H1 (cell line): ENCODE measurements at regions of chr19 and their contacts with region 1.

Region 1: DNA sequence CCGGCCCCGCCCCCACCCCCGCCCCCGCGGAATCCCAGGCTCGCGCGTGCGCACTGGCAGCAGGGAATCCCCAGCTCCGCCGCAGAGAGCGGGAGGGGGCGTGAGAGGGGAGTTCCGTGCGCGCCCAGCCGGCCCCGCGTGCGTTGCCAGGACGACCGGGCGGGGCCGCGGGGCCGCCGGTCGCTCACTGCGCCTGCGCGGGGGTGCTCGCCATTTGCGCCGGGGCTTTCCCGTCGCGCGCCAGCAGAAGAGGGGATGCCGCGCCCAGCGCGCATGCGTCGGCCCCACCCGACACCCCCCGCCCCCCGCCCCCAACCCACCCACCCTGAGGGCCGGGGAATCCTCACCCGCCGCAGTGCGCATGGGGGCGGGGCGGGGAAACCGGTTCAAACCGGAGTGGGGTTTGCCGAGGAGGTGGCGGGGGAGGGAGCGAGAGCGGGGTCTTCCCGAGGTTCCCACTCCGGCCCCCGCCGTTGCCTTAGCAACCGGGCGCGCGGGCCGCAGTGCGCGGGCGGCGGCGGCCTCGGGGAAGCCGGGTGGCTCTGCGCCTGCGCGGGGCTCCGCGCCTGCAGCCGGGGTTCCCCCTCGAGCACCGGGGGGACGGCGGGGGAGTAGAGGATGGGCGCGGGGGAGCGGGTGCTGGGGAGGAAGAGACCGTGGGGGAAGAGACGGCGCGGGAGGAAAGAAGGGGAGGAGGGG is 15.1 kb downstream of the CCDC124 start:
- DNase-seq: peak; percentile 87 to 95
- H3K4me3 ChIP-seq: peak overlapping the region in 2 of 4 experiments; percentile 48 to 73; a peak in 6 of 8 replicates
- H3K27ac ChIP-seq: no peak overlapping the region
- H3K4me1 ChIP-seq: peaks cover 0 to 32% (median 24%) of the 10 kb centered on the region in 4 experiments; a peak in 6 of 7 replicates
- H3K27me3 ChIP-seq: peaks cover 16 to 42% (median 35%) of the 10 kb centered on the region in 4 experiments
- CTCF ChIP-seq: no peak
- EP300 ChIP-seq: no peak
- POLR2A ChIP-seq: no peak
- RAD21 ChIP-seq: no peak

Region 2: DNA sequence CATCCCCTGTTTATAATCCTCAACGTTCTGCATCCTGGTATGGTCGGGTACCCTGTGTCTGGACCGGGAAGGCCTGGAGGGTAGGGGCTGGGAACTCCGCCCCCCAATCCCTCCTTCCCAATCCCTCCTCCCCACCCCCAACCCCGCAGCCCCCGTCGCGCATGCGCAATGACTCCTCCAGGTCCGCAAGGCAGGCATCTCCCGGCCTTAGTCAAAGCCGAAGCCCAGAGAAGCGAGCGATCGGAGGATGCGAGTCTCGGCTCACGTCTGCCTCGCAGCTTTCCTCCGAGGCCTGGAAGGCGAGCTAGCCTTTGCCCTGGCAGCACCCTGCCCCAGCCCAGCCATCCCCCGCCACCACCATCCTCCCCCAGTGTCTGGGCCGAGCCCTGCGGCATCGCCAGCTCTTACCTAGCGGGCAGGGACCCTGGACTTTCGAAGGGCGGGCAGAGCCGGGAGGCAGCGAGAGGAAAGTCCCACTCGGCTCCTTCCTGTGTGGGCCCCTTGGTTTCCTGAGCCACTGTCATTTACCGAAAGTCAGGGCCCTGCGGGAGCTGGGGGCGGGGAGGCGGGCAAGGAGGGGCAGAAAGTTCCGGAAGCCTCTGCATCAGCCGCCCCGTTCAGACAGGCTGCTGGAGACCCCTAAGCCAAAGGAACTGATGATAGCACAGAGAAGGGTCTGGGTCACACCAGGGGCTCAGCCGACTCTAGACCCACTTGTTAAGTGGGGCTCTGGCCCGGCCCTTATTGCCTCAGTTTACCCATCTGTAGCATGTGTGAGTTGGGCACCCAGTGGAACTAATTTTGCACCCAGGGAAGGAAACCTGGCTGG is 100.2 kb before region 1 on chr19 and contains the start of gene JAK3:
- CTCF ChIA-PET with region 1: no interaction called
- POLR2A ChIA-PET with region 1: no interaction called
- DNase-seq: peak; percentile 75 to 90
- H3K4me3 ChIP-seq: peak within 1 kb of the TSS in 2 of 4 experiments; percentile 23 to 52; a peak in 4 of 8 replicates
- H3K27ac ChIP-seq: no peak within 1 kb of the TSS
- H3K4me1 ChIP-seq: peaks cover 0 to 8% (median under 1%) of the 10 kb centered on the region in 4 experiments; a peak in 4 of 7 replicates
- H3K27me3 ChIP-seq: peaks cover 0 to 7% (median 3%) of the 10 kb centered on the region in 4 experiments; a peak in 5 of 7 replicates
- CTCF ChIP-seq: no peak
- EP300 ChIP-seq: no peak
- POLR2A ChIP-seq: no peak
- RAD21 ChIP-seq: no peak
- total RNA-seq, gene JAK3: 3.2 and 4.0 TPM in 2 replicates

Region 3: DNA sequence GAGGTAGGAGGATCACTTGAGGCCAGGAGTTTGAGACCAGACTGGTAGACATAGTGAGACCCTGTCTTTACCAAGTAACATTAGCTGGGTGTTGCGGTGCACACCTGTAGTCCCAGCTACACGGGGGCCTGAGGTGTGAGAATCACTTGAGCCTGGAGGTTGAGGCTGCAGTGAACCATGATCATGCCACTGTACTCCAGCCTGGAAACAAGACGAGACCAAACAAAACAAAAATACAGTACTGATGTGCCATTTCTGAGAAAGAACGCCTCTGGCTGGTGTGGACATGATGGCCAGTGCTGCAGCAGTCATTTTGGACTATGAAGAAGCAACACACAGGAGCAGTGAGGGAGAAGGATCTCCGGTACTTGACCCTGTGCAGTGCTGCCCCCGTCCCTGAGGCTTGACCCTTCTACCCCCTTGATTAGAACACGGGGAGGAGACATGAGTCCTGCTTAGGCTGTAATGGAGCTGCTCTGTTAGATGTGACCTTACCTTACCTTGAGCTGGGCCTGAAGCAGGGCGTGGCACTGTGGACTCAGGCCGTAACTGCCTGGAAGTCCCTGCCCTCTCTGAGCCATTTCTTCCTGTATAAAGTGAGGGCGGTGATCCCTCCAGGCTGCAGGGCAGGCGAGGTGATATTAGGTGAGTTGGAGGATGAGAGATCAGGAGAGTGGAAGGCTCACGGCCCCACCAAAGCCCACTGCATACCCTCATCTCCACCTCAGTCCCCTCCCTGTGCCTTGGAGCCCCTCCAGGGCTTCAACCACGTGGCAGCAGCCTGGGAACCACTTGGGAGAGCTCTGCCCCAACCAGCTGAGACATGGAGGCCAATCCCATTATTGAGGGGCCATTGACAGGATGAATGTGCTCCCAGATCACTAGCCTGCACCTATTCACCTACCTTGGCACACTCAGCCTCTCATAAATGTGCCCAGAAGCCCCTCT is 82.3 kb before region 1 on chr19:
- CTCF ChIA-PET with region 1: interaction called, 7 read pairs
- POLR2A ChIA-PET with region 1: interaction called, 25 read pairs
- DNase-seq: peak in 1 of 2 experiments; percentile 59
- H3K4me3 ChIP-seq: no peak overlapping the region
- H3K27ac ChIP-seq: no peak overlapping the region
- H3K4me1 ChIP-seq: peaks cover 0 to 18% (median 13%) of the 10 kb centered on the region in 4 experiments; a peak in 6 of 7 replicates
- H3K27me3 ChIP-seq: no peaks in the 10 kb centered on the region
- CTCF ChIP-seq: no peak
- EP300 ChIP-seq: no peak
- POLR2A ChIP-seq: peak; percentile 81 to 92
- RAD21 ChIP-seq: no peak

Region 4: DNA sequence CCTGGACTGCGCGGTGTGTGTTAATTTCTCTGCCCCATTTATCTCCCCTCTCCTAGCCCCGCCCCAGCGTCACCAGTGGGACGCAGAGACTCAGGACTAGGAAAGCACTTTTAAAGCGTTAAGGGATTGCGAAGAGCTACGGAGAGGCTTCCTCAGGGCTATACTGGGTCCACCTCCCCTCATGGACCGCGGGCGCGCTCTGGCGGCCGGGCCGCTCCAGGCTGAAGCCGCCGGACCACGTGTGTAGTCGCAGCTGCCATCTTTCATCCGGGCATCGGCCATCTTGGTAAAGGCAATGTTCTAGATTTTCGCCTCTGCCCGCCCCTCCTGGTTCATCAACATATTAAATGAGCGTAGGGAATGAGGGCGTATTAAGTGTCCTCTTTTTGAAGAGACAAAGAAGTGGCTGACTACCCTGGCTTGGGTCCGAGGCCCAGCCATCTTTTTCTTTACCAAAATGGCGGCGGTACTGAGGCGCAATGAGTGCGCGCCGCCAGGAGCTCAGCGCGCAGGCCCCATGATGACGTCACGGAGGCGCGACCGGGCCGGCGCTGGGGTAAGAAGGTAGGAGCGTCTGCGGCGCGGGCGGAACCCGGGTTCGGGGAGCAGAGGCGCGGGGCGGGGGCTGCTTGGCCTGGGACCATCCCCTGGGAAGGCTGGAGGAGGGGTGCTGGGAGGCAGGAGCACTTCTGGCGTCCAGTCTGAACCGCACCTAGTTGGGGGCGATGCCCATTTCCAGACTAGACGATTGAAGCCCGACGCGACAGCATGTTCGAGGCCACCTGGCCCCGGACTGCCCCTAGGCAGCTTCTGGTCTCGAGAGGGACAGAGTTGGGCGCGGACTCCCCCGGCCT is 15.3 kb before region 1 on chr19 and contains the start of gene CCDC124:
- CTCF ChIA-PET with region 1: interaction called, 90 read pairs
- POLR2A ChIA-PET with region 1: interaction called, 58 read pairs
- DNase-seq: peak; percentile 86 to 95
- H3K4me3 ChIP-seq: peak within 1 kb of the TSS; percentile 80 to 94 (median 91)
- H3K27ac ChIP-seq: peak within 1 kb of the TSS; percentile 96
- H3K4me1 ChIP-seq: peaks cover 0 to 4% (median 2%) of the 10 kb centered on the region in 4 experiments; a peak in 3 of 7 replicates
- H3K27me3 ChIP-seq: no peaks in the 10 kb centered on the region
- CTCF ChIP-seq: peak; percentile 93 to 97 (median 97)
- EP300 ChIP-seq: peak in 1 of 2 experiments; percentile 16; a peak in 1 of 3 replicates
- POLR2A ChIP-seq: no peak; a peak in 2 of 3 replicates
- RAD21 ChIP-seq: peak; percentile 97 to 98
- total RNA-seq, gene CCDC124: 101 and 103 TPM in 2 replicates

Region 5: DNA sequence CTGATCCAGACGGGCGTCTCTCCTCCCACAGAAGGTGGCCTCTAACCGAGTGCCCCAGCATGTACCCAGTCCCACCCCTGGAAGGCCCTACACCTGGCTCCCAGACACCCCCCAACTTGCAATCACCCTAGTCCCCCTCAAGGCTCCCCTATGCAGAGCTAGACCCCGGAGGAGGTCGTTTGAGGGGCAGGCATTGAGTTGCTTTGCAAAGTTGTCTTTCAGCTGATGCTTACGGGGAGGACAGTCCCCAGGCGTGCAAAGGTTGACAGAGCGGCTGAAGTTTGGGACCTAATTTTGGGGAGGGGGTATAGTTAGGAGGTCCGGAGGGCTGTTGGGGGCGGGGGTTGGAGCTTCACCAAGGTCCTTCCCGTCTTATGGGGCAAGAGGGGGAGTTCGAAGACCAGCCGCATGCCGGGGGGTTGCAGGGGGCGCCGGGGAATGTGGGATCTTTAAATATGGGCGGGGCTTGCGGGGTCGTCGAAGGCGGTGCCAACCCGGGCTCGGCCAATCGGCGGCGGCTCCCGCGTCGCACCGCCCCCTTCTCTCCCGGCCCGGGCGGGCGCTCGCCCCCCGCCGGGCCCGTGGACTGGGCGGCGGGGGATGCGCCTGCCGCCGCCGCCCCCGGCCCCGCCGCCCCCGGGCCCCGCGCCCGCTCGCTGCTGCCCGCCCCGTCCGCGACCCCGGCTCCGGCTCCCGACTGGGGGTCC is 18.7 kb after region 1 on chr19 and contains the start of gene KCNN1:
- CTCF ChIA-PET with region 1: interaction called, 18 read pairs
- POLR2A ChIA-PET with region 1: interaction called, 23 read pairs
- DNase-seq: peak in 1 of 2 experiments; percentile 83
- H3K4me3 ChIP-seq: peak within 1 kb of the TSS; percentile 55 to 87 (median 72)
- H3K27ac ChIP-seq: no peak within 1 kb of the TSS
- H3K4me1 ChIP-seq: peaks cover 4 to 18% (median 11%) of the 10 kb centered on the region in 4 experiments
- H3K27me3 ChIP-seq: peaks cover 0 to 9% (median 3%) of the 10 kb centered on the region in 4 experiments; a peak in 3 of 7 replicates
- CTCF ChIP-seq: no peak
- EP300 ChIP-seq: no peak
- POLR2A ChIP-seq: no peak
- RAD21 ChIP-seq: no peak
- total RNA-seq, gene KCNN1: 9.3 and 11.0 TPM in 2 replicates

Region 6: DNA sequence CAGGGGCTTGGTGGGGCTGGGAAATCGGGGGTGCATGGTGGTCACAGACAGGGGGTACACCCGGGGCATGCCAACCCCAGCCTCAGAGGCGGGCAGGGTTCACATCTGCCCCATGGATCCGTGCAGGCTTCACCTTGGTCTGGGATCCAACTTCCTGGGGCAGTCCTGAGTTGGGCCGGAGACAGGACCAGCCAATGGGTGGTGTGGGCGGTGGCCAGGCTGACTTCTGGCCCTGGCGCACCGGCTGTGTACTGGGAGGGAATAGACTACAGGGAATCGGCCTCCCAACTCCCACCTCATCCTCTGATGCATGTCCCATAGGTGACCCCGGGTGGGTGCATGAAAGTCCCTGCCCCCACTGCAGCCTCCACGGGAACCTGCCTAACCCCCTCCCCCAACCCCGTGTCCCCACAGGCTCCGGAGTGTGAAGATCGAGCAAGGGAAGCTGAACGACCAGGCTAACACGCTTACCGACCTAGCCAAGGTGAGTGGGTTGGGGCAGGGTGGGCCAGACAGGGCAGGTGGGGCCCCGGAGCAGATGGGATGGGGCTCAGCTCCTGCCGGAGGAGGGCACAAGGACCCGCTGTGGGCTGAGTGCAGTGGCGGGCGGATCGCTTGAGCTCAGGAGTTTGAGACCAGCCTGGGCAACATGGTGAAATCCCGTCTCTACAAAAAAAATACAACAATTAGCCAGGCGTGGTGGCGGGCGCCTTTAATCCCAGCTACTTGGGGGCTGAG is 45.3 kb after region 1 on chr19:
- CTCF ChIA-PET with region 1: interaction called, 271 read pairs
- POLR2A ChIA-PET with region 1: interaction called, 17 read pairs
- DNase-seq: no peak
- H3K4me3 ChIP-seq: no peak overlapping the region
- H3K27ac ChIP-seq: no peak overlapping the region
- H3K4me1 ChIP-seq: peaks cover 0 to 3% (median 0%) of the 10 kb centered on the region in 4 experiments; a peak in 2 of 7 replicates
- H3K27me3 ChIP-seq: no peaks in the 10 kb centered on the region
- CTCF ChIP-seq: no peak
- EP300 ChIP-seq: no peak
- POLR2A ChIP-seq: no peak
- RAD21 ChIP-seq: no peak

Region 7: GRCh38 chr19:18023622-18024251 is 75.8 kb after region 1 on chr19:
- CTCF ChIA-PET with region 1: no interaction called
- POLR2A ChIA-PET with region 1: no interaction called
- DNase-seq: no peak
- H3K4me3 ChIP-seq: no peak overlapping the region
- H3K27ac ChIP-seq: no peak overlapping the region
- H3K4me1 ChIP-seq: peaks cover 0 to 4% (median 2%) of the 10 kb centered on the region in 4 experiments; a peak in 1 of 7 replicates
- H3K27me3 ChIP-seq: no peaks in the 10 kb centered on the region
- CTCF ChIP-seq: no peak
- EP300 ChIP-seq: no peak
- POLR2A ChIP-seq: no peak
- RAD21 ChIP-seq: no peak